ENCODE measurements at regions of chr1 and their contacts with region 1.

Region 1: GRCh38 chr1:205528887-205529825 is 24.7 kb downstream of the CDK18 start:
- DNase-seq: no peak
- H3K4me3 ChIP-seq: peak overlapping the region; percentile 37
- H3K27me3 ChIP-seq: no peaks in the 10 kb centered on the region; the same call in 1 of the 2 replicates
- CTCF ChIP-seq: peak; percentile 96

Region 2: DNA sequence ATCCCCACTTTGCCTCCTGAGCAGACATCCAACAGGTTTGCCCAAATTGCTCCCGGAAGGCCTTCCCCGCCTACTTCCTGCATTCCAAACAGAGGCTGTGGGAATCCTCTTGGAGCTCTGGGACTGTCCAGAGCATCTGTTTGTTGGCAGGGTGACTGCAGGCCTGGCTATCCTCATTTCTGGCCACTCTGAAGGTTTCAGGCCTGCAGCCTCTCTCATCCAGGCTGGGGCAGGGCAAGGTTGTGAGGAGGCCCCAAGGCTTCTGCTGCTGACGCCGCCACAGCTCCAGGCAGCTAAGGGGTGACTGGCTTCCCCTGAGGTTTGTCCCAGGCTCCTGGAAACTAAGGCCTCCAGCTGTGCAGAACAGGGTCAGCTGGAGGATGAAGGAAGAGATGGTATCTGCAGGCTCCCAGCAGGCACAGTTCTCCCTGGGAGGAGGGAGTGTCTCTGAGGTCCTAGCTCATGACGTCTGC is 13.3 kb before region 1 on chr1:
- CTCF ChIA-PET with region 1: interaction called, 819 read pairs
- POLR2A ChIA-PET with region 1: no interaction called
- DNase-seq: no peak
- H3K4me3 ChIP-seq: no peak overlapping the region
- H3K27me3 ChIP-seq: peaks cover 11% of the 10 kb centered on the region
- CTCF ChIP-seq: no peak

Region 3: GRCh38 chr1:205631727-205632373 is 102.7 kb after region 1 on chr1 and contains the start of gene ELK4:
- CTCF ChIA-PET with region 1: interaction called, 16 read pairs
- POLR2A ChIA-PET with region 1: no interaction called
- DNase-seq: peak; percentile 80
- H3K4me3 ChIP-seq: peak within 1 kb of the TSS; percentile 63
- H3K27me3 ChIP-seq: no peaks in the 10 kb centered on the region
- CTCF ChIP-seq: peak; percentile 78
- polyA plus RNA-seq, gene ELK4: 3.4 and 5.7 TPM in 2 replicates

Measured in BJ (cell line).